MCF 10A (cell line): ENCODE measurements at regions of chr6 and their contacts with region 1.

Region 1: DNA sequence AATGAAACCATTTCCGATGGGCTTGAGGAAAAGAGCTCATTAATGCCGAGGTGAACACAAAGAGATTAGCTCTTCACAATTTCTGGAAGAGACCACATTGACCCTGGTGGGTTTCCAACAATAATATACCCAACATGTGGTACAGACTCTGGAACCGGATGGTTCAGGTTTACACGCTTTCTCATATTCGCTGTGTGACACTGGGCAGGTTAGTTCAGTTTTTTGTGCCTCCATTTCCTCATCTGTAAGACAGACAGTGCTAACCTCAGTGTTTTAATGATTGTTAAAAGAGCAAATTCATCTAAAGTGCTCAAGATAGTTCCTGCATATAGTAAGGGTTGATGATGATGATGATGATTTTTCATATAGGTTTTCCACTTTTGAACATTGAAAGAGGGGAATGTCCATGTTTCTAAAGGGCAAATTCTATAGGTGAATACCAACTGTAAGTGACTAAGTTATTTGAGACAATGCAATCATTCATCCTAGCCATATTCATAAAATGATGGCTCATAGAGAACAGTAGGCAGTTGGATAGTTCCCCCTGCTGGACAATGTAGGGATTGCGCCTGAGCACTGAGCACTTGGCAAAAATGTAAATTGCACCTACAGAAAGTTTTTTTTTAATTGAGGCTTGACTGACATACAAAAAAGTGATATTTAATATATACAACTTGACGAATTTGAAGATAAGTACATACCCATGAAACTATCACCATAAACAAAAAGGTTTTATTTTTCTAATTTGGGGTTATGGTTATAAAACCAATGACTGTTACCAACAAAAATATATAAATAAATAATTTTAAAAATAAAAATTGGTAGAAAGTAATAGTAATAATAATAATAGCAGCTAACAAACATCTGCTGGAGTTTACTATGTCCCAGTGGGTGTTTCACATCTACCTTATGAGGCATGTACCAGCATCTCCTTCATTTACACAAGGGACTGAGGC is 2.1 kb upstream of the PERP start:
- DNase-seq: peak; percentile 78
- H3K4me3 Mint-ChIP-seq: no peak overlapping the region
- H3K27ac Mint-ChIP-seq: peak overlapping the region; percentile 50
- H3K4me1 Mint-ChIP-seq: peaks cover 14% of the 10 kb centered on the region
- H3K27me3 Mint-ChIP-seq: peaks cover 2% of the 10 kb centered on the region
- CTCF ChIP-seq: peak; percentile 80

Region 2: DNA sequence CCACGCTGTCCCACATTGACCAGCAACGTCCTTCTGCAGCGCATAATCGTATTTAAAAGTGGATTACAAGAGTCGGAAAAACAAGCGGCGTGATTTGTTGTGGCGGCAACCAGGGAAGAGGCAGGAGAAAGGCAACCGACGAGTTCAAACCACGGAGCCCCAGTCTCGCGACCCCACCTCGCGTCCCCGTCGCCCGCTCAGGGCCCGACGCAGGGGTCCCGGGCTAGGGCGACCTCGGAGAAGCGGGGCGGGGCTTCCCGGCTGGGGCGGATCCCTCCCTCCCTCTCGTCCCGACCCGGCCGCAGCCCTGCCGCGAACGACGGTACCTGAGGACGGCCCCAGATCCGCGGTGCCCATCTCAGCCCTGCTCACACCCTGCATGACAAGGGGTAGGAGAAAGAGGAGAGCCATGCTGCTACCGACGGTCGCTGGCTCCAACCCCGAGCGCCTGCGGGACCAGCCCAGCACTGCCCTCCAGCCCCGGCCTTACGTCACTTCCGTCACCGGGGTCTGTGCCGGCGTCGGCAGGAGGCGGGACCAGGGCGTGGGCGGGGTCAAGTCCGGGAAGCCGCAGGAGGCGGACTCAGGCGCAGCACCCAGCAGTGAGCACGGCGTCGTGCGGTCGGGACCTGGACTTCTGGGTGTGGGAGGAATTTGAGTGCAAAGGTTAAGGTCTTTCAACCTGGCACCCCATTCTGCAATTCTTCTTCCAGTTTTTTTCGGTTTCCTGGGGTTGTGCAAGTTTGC is 890.2 kb before region 1 on chr6 and contains the start of gene IFNGR1:
- CTCF ChIA-PET with region 1: no interaction called
- POLR2A ChIA-PET with region 1: interaction called, 28 read pairs
- intact Hi-C with region 1: no loop called
- DNase-seq: peak; percentile 96
- H3K4me3 Mint-ChIP-seq: peak within 1 kb of the TSS; percentile 91
- H3K27ac Mint-ChIP-seq: peak within 1 kb of the TSS; percentile 93
- H3K4me1 Mint-ChIP-seq: peaks cover 38% of the 10 kb centered on the region
- H3K27me3 Mint-ChIP-seq: no peaks in the 10 kb centered on the region
- CTCF ChIP-seq: no peak
- total RNA-seq, gene IFNGR1: 57.9 and 58.4 TPM in 2 replicates

Region 3: DNA sequence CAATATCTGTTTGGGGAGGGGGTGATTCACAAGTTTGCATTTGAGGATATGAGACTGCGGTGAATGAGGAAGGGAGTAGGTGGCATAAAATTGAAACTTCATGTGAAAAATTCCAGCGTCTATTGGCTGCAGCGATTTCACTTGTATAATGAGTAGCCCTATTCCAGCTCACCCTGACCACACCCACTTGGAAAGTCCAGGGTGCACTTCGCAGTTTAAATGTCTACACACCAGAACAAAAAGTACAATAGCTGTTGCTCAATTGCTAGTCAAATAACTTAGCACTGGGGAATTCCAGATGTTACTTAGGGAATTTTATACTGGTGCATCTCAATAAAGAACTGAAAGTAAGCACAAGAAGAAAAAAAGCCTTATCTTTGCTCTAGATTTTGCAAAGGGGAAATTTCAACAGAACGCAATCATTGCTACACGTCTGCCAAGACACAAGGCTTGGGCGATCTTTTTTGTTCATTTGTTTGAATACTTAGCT is 236.0 kb before region 1 on chr6:
- CTCF ChIA-PET with region 1: interaction called, 6 read pairs
- POLR2A ChIA-PET with region 1: interaction called, 59 read pairs
- intact Hi-C with region 1: loop called (anchors 5 kb)
- DNase-seq: peak; percentile 97
- H3K4me3 Mint-ChIP-seq: peak overlapping the region; percentile 72
- H3K27ac Mint-ChIP-seq: peak overlapping the region; percentile 78
- H3K4me1 Mint-ChIP-seq: peaks cover 15% of the 10 kb centered on the region
- H3K27me3 Mint-ChIP-seq: no peaks in the 10 kb centered on the region
- CTCF ChIP-seq: no peak

Region 4: GRCh38 chr6:138012682-138013081 is 96.6 kb before region 1 on chr6:
- CTCF ChIA-PET with region 1: interaction called, 127 read pairs
- POLR2A ChIA-PET with region 1: interaction called, 386 read pairs
- intact Hi-C with region 1: loop called (anchors 1 kb)
- DNase-seq: no peak
- H3K4me3 Mint-ChIP-seq: no peak overlapping the region
- H3K27ac Mint-ChIP-seq: no peak overlapping the region
- H3K4me1 Mint-ChIP-seq: no peaks in the 10 kb centered on the region
- H3K27me3 Mint-ChIP-seq: no peaks in the 10 kb centered on the region
- CTCF ChIP-seq: no peak

Region 5: GRCh38 chr6:138088330-138088766 is 21.0 kb before region 1 on chr6:
- CTCF ChIA-PET with region 1: interaction called, 9 read pairs
- POLR2A ChIA-PET with region 1: interaction called, 505 read pairs
- intact Hi-C with region 1: loop called (anchors 1 kb)
- DNase-seq: peak; percentile 92
- H3K4me3 Mint-ChIP-seq: peak overlapping the region; percentile 62
- H3K27ac Mint-ChIP-seq: peak overlapping the region; percentile 97
- H3K4me1 Mint-ChIP-seq: peaks cover 34% of the 10 kb centered on the region
- H3K27me3 Mint-ChIP-seq: no peaks in the 10 kb centered on the region
- CTCF ChIP-seq: no peak

Region 6: GRCh38 chr6:138176652-138177232 is 67.4 kb after region 1 on chr6:
- CTCF ChIA-PET with region 1: no interaction called
- POLR2A ChIA-PET with region 1: no interaction called
- intact Hi-C with region 1: no loop called
- DNase-seq: no peak
- H3K4me3 Mint-ChIP-seq: no peak overlapping the region
- H3K27ac Mint-ChIP-seq: no peak overlapping the region
- H3K4me1 Mint-ChIP-seq: no peaks in the 10 kb centered on the region
- H3K27me3 Mint-ChIP-seq: peaks cover 8% of the 10 kb centered on the region
- CTCF ChIP-seq: no peak

Region 7: GRCh38 chr6:138455746-138456400 is 346.6 kb after region 1 on chr6:
- CTCF ChIA-PET with region 1: interaction called, 3 read pairs
- POLR2A ChIA-PET with region 1: interaction called, 12 read pairs
- intact Hi-C with region 1: no loop called
- DNase-seq: peak; percentile 94
- H3K4me3 Mint-ChIP-seq: peak overlapping the region; percentile 68
- H3K27ac Mint-ChIP-seq: peak overlapping the region; percentile 82
- H3K4me1 Mint-ChIP-seq: peaks cover 10% of the 10 kb centered on the region
- H3K27me3 Mint-ChIP-seq: no peaks in the 10 kb centered on the region
- CTCF ChIP-seq: no peak

Region 8: GRCh38 chr6:138692058-138692977 is 583.0 kb after region 1 on chr6:
- CTCF ChIA-PET with region 1: interaction called, 3 read pairs
- POLR2A ChIA-PET with region 1: no interaction called
- intact Hi-C with region 1: loop called (anchors 5 kb)
- DNase-seq: peak; percentile 57
- H3K4me3 Mint-ChIP-seq: peak overlapping the region; percentile 90
- H3K27ac Mint-ChIP-seq: peak overlapping the region; percentile 87
- H3K4me1 Mint-ChIP-seq: peaks cover 11% of the 10 kb centered on the region
- H3K27me3 Mint-ChIP-seq: no peaks in the 10 kb centered on the region
- CTCF ChIP-seq: peak; percentile 92